Caco-2 (cell line): ENCODE measurements at regions of chr10 and their contacts with region 1.

Region 1: DNA sequence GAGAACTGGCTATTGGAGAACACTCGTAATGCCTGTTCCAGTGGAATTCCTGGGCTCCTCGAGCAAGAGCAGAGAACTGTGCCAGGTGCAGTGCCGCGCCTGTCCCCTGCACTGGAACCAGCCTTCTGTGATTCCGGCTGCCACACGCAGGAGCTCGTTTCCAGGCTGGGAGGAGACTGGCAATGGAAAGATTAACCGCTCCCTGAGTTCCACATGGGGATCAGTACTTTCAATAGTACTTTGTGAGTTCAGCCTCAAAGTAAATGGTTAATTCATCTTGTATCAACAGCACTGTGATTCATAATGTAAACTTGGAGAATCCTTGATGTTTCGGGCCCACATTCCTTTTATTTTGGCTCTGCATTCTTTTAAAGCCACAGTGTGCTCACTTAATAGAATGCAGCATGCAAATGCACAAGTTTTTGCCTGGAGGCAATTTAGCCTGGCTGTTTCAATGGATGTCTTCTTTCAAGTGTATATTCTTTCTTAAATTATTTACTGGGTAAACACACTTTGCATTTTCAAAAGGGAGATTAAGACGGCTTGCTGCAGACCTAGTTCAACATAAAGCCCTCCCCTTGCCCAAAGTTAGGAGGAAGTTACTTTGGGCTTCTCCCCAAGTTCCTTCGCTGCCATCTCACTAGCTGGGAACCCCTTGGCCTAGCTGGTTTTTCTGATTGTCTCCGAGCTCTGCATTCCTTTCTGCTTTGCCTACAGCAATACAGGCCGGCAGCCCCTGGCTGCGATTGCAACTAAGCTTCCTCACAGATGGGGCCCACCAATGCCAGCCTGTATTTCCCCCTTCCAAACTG is 138.1 kb upstream of the TCF7L2 start:
- DNase-seq: peak; percentile 85 to 87
- H3K4me3 ChIP-seq: no peak overlapping the region
- H3K4me3 Mint-ChIP-seq: peak overlapping the region; percentile 76
- H3K27ac Mint-ChIP-seq: peak overlapping the region; percentile 95
- H3K4me1 ChIP-seq: peaks cover 50% of the 10 kb centered on the region
- H3K4me1 Mint-ChIP-seq: peaks cover 58% of the 10 kb centered on the region
- H3K27me3 ChIP-seq: no peaks in the 10 kb centered on the region
- H3K27me3 Mint-ChIP-seq: no peaks in the 10 kb centered on the region
- CTCF ChIP-seq: no peak

Region 2: DNA sequence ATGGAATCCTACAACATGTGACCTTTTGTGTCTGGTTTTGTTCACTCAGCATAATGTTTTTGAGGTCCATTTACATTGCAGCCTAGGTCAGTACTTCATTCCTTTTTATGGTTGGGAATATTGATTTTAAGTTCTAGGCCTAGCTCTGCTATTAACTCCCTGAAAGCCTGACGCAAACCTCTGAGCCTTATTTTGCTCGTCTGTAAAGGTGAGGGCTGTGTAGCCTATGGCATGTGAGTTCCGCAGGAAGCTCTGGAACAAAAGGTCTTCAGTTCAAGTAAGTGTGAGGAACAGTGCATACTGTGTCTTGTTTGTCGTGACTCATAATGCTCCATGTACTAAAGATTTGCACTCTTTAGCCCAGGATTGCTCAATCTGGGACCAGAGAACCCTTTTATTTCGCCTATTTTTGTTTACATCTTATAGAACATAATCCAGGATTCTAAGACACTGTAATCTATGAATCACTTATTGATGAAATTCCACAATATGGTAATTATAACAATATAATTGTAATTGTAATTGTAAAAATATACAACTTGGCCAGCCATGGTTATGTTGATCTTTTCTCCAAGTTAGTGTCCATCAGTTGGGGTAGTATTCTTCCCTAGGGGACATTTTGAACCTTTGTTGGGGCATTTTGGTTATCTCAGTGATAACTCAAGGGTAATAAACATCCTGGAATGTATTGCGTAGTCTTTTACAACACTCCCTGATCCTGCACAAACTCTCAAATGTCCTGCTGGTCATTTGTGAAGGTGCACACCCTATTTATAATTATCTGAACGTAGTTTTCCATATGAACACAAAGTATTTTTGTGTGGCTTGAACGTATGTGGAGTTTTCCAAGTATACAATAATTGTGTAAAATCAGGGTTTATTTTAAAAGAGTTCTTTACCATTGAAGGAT is 180.2 kb before region 1 on chr10:
- CTCF ChIA-PET with region 1: no interaction called
- POLR2A ChIA-PET with region 1: no interaction called
- intact Hi-C with region 1: loop called (anchors 5 kb)
- DNase-seq: peak; percentile 62 to 67
- H3K4me3 ChIP-seq: no peak overlapping the region
- H3K4me3 Mint-ChIP-seq: peak overlapping the region; percentile 31
- H3K27ac Mint-ChIP-seq: peak overlapping the region; percentile 89
- H3K4me1 ChIP-seq: peaks cover 20% of the 10 kb centered on the region
- H3K4me1 Mint-ChIP-seq: peaks cover 46% of the 10 kb centered on the region
- H3K27me3 ChIP-seq: no peaks in the 10 kb centered on the region
- H3K27me3 Mint-ChIP-seq: no peaks in the 10 kb centered on the region
- CTCF ChIP-seq: peak in 1 of 2 experiments; percentile 50

Region 3: GRCh38 chr10:112741830-112742411 is 70.0 kb before region 1 on chr10:
- CTCF ChIA-PET with region 1: interaction called, 12 read pairs
- POLR2A ChIA-PET with region 1: no interaction called
- intact Hi-C with region 1: no loop called
- DNase-seq: no peak
- H3K4me3 ChIP-seq: no peak overlapping the region
- H3K4me3 Mint-ChIP-seq: no peak overlapping the region
- H3K27ac Mint-ChIP-seq: no peak overlapping the region
- H3K4me1 ChIP-seq: peaks cover 82% of the 10 kb centered on the region
- H3K4me1 Mint-ChIP-seq: peaks cover 70% of the 10 kb centered on the region
- H3K27me3 ChIP-seq: no peaks in the 10 kb centered on the region
- H3K27me3 Mint-ChIP-seq: no peaks in the 10 kb centered on the region
- CTCF ChIP-seq: no peak

Region 4: DNA sequence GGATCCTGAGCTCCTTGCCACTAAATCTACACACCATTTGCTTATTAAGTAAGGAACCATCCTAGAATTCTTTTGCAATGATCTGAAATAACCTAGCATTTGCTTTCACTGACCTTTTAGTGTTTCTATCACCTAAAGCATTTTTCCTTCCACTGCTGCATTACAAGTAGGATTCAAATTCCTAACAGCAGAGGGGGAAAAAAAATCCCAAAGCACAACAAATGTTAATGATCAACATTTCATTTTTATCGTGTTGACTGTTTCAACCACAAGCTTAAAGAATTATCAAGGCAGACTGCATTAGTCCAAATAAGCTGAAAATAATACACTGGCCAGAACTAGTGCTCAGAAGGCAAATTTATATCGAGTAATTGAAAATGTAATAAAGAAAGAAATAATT is 36.6 kb before region 1 on chr10:
- CTCF ChIA-PET with region 1: interaction called, 10 read pairs
- POLR2A ChIA-PET with region 1: interaction called, 5 read pairs
- intact Hi-C with region 1: loop called (anchors 1 kb)
- DNase-seq: peak in 1 of 2 experiments; percentile 33
- H3K4me3 ChIP-seq: no peak overlapping the region
- H3K4me3 Mint-ChIP-seq: no peak overlapping the region
- H3K27ac Mint-ChIP-seq: no peak overlapping the region
- H3K4me1 ChIP-seq: peaks cover 59% of the 10 kb centered on the region
- H3K4me1 Mint-ChIP-seq: peaks cover 43% of the 10 kb centered on the region
- H3K27me3 ChIP-seq: no peaks in the 10 kb centered on the region
- H3K27me3 Mint-ChIP-seq: no peaks in the 10 kb centered on the region
- CTCF ChIP-seq: peak; percentile 32 to 34

Region 5: DNA sequence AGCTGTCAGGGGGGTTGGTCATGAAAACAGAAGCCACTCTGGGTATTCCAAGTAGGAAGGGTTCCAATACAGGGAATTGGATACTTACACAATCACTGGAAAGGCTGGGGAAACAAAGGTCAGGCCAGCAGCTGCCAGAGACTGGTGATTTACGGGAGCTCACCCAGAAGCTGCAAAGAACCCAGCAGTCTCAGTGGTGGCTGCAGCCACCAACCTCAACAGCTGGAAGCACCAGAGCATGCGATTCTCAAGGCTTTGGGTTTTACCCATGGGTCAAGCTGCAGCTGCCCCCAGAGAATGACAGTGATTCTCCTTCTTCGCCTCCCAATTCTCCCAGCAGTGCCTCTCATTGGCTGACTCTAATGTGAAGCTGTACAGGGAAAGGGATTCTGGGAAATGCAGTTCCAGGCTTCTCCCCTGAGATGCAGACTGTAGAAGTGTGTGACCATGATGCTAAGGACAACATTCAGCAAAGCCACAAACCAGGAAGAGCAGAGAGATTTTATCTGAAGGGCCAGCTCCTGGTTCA is 30.9 kb after region 1 on chr10:
- CTCF ChIA-PET with region 1: no interaction called
- POLR2A ChIA-PET with region 1: no interaction called
- intact Hi-C with region 1: no loop called
- DNase-seq: no peak
- H3K4me3 ChIP-seq: no peak overlapping the region
- H3K4me3 Mint-ChIP-seq: no peak overlapping the region
- H3K27ac Mint-ChIP-seq: no peak overlapping the region
- H3K4me1 ChIP-seq: peaks cover 9% of the 10 kb centered on the region; the same call in 1 of the 2 replicates
- H3K4me1 Mint-ChIP-seq: no peaks in the 10 kb centered on the region
- H3K27me3 ChIP-seq: no peaks in the 10 kb centered on the region
- H3K27me3 Mint-ChIP-seq: no peaks in the 10 kb centered on the region
- CTCF ChIP-seq: no peak

Region 6: DNA sequence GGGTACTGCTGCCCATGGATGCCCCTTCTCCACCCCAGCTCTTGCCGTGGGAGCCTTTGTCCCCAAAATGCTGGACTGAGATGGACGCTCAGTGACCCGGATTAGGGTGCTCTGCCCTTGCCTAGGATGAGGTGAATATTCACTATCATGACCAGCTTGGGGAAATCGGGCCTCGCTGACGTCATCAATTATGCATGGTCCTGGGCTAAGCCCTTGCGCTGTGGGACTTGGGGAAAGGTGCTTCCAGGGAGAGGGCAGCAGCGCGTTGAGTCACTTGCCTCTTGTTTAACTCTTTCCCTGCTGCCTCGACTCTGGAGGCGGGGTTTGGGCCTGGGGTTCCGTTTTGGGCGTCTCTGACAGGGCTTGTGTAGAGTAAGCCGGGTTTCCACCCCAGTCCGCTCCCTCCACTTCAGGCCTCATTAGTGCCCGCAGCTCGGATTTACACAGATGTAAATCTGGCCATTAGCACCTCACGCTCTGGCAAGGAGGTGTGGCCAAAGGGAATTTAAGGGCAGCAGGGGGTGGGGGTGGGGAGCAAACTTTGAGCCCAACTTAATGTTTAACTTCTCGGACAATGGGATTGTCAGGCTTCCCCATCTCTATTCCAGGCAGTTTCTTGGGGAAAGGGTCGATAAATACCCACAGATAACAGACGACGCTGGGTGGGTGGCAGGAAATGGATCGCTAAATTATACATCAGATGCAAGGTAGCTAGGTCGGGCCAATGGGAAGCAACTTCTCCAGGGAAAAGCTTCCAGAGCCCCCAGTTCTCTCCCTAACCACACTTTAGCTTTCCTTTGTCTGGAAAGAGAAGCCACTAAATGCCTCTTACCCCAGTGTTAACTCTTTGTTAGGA is 86.8 kb after region 1 on chr10:
- CTCF ChIA-PET with region 1: no interaction called
- POLR2A ChIA-PET with region 1: no interaction called
- intact Hi-C with region 1: loop called (anchors 1 kb)
- DNase-seq: peak; percentile 83 to 92
- H3K4me3 ChIP-seq: peak overlapping the region; percentile 36
- H3K4me3 Mint-ChIP-seq: peak overlapping the region; percentile 84
- H3K27ac Mint-ChIP-seq: peak overlapping the region; percentile 88
- H3K4me1 ChIP-seq: peaks cover 20% of the 10 kb centered on the region
- H3K4me1 Mint-ChIP-seq: peaks cover 12% of the 10 kb centered on the region
- H3K27me3 ChIP-seq: no peaks in the 10 kb centered on the region
- H3K27me3 Mint-ChIP-seq: no peaks in the 10 kb centered on the region
- CTCF ChIP-seq: no peak